Common myeloid progenitor, CD34-positive (primary cell): ENCODE measurements at regions of chr1 and their contacts with region 1.

Region 1: DNA sequence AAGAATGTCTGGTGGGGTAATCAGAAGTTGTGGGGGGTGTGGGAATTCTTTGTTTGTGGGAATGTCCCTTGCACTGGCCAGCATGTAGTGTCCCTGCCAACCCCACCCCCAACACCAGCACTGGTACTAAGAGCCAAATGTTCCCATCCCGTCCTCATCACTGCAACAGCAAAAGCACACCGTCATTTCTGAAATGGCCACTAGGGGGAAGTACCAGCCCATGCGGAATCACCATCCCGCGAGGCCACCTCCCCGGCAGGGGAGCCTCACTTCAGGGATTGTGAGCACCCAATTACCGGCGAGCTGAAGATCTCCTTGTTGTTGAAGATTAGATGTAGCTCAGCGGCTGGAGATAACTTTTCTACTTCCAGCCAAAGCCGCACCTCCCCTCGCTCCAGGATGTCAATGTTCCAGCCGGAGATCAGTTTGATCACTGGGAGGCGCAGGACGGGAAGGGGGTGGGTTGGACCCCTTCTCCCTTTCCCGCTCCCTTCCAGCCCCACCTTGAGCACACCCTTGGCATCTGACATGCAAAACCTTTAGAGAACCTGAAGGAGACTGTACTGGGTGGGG is 41.0 kb downstream of the MYOM3 start:
- DNase-seq: peak; percentile 62 to 82 (median 79)
- H3K4me3 ChIP-seq: no peak overlapping the region
- H3K27ac ChIP-seq: no peak overlapping the region
- H3K4me1 ChIP-seq: peaks cover 0 to 3% (median 2%) of the 10 kb centered on the region in 4 experiments
- H3K27me3 ChIP-seq: peaks cover 0 to 2% (median 0%) of the 10 kb centered on the region in 5 experiments

Region 2: GRCh38 chr1:24020025-24020424 is 50.9 kb before region 1 on chr1:
- CTCF ChIA-PET with region 1: no interaction called
- POLR2A ChIA-PET with region 1: no interaction called
- DNase-seq: no peak
- H3K4me3 ChIP-seq: no peak overlapping the region
- H3K27ac ChIP-seq: no peak overlapping the region
- H3K4me1 ChIP-seq: peaks cover 0 to 3% (median 0%) of the 10 kb centered on the region in 4 experiments
- H3K27me3 ChIP-seq: no peaks in the 10 kb centered on the region

Region 3: DNA sequence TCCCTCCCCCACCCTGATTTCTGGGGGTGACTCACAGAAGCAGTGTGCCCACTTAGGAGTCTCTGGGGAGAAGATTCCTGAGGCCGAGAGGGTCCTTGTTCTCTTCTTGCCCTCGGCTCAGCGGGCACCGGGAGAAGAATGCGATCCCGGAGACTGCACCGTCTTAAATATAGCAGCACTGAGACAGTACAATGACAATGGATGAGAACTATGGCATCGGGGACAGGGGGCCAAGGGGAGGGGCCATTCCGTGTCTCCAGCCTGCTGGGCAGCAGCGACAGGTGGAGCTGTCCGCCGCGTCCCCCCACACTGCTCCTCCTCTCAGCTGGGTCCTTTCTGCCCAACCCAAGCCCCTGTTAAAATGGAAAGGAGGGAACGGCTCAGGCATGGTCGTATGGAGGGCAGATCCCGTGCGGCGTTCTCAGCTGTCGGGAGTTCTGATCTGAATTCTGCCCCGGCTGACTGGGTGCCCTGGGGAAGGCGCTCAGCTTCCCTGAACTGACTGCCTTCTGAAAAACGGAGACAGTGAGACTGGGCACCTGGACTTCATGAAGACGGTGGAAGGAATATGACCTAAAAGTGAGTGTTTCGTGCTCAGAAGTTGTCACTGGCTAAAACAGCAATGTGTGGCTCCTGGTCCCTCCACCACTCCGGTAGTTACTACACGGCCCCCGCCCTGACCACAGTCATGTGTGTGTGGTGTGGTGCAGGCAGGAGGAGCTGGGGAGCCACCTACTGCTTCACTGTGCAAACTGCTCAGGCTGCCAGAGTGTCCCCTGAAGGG is 41.3 kb after region 1 on chr1 and contains the start of gene MYOM3:
- CTCF ChIA-PET with region 1: interaction called, 11 read pairs
- POLR2A ChIA-PET with region 1: no interaction called
- DNase-seq: peak; percentile 75 to 91 (median 87)
- H3K4me3 ChIP-seq: peak within 1 kb of the TSS in 5 of 7 experiments; percentile 24 to 66 (median 43)
- H3K27ac ChIP-seq: no peak within 1 kb of the TSS
- H3K4me1 ChIP-seq: peaks cover 0 to 8% (median 7%) of the 10 kb centered on the region in 4 experiments
- H3K27me3 ChIP-seq: peaks cover 0 to 18% (median 7%) of the 10 kb centered on the region in 5 experiments

Region 4: DNA sequence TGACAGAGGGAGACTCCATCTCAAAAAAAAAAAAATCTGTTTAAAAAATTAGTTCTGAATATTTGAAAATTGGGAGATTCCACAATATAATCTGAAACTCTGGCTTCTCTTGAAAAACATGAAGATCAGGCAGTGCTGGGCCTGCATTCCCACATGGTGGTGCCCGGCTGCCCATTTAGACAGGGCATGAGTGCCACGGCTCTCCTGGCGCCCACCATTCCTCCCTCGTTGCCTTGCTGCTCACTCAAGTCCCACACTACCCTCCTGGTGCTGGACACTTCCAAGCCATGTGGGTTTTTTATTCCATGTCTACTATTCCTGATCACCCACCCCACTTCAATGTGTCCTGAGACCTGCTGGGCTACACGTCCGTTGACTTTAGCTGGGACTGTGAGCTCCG is 51.9 kb after region 1 on chr1:
- CTCF ChIA-PET with region 1: no interaction called
- POLR2A ChIA-PET with region 1: no interaction called
- DNase-seq: no peak
- H3K4me3 ChIP-seq: no peak overlapping the region
- H3K27ac ChIP-seq: no peak overlapping the region
- H3K4me1 ChIP-seq: no peaks in the 10 kb centered on the region
- H3K27me3 ChIP-seq: peaks cover 0 to 6% (median 0%) of the 10 kb centered on the region in 5 experiments